Panc1 (cell line): ENCODE measurements at regions of chr3 and their contacts with region 1.

Region 1: GRCh38 chr3:13598926-13599886 is 50.3 kb downstream of the FBLN2 start:
- DNase-seq: peak; percentile 33
- ATAC-seq: 0 out of 2 replicates have a peak, but pooled peaks have one; percentile 36
- H3K4me3 ChIP-seq: no peak overlapping the region
- H3K27ac ChIP-seq: no peak overlapping the region
- H3K4me1 ChIP-seq: no peaks in the 10 kb centered on the region
- H3K27me3 ChIP-seq: no peaks in the 10 kb centered on the region
- CTCF ChIP-seq: no peak

Region 2: DNA sequence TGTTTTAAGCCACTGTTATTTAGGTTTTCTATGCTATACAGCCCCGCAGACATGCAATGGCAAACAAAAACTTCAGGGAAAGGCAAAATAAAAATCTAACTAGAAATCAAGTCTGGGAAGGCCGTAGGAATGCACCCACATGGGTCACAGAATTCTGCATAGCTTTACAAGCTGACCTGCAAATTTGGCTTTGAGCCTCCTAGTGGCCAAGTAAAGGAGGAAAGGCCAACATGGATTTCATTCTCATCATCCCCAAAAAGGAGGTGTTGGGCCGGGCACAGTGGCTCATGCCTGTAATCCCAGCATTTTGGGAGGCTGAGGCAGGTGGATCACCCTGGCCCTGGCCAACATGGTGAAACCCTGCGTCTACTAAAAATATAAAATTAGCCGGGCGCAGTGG is 74.0 kb after region 1 on chr3:
- CTCF ChIA-PET with region 1: interaction called, 14 read pairs
- POLR2A ChIA-PET with region 1: no interaction called
- in situ Hi-C with region 1: no loop called
- intact Hi-C with region 1: no loop called
- DNase-seq: no peak
- ATAC-seq: no peak
- H3K4me3 ChIP-seq: no peak overlapping the region
- H3K27ac ChIP-seq: no peak overlapping the region
- H3K4me1 ChIP-seq: no peaks in the 10 kb centered on the region
- H3K27me3 ChIP-seq: peaks cover 2% of the 10 kb centered on the region; the same call in 1 of the 2 replicates
- CTCF ChIP-seq: no peak; the same call in 1 of the 2 replicates